CD14-positive monocyte (primary cell): ENCODE measurements at regions of chr10 and their contacts with region 1.

Region 1: DNA sequence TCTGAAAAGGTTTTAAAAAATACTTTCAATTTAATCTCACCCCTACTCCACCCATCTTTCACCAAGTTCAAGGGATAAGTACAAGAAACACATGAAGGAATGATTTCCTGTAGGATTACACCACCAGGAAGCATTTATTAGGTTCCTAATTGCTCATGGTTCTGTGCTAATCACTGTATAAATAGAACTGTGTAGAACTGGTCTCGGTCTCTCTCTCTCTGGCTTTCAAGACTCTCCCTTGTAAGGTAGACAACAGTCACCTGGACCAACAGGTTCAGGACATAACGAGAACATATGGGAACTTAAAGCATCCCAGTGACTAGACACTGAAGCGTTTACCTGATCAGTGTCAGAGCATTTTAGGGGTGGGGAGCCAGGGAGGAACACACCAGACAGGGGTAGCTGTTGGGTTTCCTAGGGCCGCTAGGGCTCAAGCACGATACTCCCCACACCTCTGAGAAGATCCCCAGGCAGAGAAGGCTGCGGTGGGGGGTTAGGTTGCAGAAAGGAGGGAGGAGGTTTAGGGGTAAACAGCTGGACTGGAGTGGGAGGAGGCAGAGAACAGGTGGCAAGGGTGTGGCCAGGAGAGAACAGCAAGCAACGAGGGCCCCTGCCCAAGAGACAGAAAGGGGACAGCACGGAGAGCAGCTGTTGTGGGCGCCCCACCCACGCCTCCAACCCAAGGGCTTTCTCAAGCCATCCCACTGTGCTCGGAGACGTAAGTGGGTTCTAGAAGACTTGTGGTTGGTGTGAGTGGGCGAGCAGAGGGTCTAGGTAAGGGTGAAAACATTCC is 52.5 kb upstream of the USP6NL start:
- DNase-seq: no peak
- H3K4me3 ChIP-seq: no peak overlapping the region
- H3K4me3 Mint-ChIP-seq: peak overlapping the region; percentile 3 to 49
- H3K27ac ChIP-seq: no peak overlapping the region
- H3K27ac Mint-ChIP-seq: peak overlapping the region in 1 of 7 donors; percentile 40
- H3K4me1 ChIP-seq: peaks cover 30 to 45% of the 10 kb centered on the region in 2 donors
- H3K4me1 Mint-ChIP-seq: peaks cover 47% of the 10 kb centered on the region
- H3K27me3 ChIP-seq: peaks cover 0 to 4% of the 10 kb centered on the region in 2 donors
- H3K27me3 Mint-ChIP-seq: peaks cover 8 to 13% (median 9%) of the 10 kb centered on the region in 3 donors
- CTCF ChIP-seq: no peak

Region 2: DNA sequence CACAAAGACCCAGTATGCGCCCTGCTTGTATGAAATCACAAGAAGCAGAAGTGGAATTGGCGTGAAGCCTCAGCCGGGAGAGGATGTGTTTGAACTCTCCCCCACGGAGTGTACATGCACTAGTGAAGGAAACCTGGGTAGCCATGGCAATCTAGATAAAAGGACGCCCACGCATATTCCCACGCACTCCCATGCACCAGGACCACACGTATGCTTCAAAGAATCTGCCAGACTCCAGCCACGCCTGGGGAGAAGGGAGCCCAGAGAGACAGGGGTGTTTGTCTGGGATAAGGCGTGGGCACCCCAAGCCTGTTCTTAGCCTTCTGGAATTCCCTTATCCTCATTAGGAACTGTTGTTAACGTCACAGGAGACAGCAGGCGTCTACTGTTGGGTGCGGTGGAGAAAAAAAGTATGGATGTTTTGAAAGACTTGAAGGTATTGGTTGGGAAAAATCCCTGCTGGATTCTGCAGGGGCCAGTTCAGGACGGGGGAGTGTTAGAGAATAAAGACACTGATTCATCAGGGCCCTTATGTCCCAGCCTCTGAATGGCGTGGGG is 49.3 kb after region 1 on chr10:
- intact Hi-C with region 1: loop called in 1 of 2 experiments (anchors 10 kb)
- DNase-seq: peak in 2 of 3 donors; percentile 24 to 29
- H3K4me3 ChIP-seq: no peak overlapping the region
- H3K4me3 Mint-ChIP-seq: peak overlapping the region in 1 of 2 donors; percentile 48
- H3K27ac ChIP-seq: no peak overlapping the region
- H3K27ac Mint-ChIP-seq: no peak overlapping the region
- H3K4me1 ChIP-seq: peaks cover 42 to 60% of the 10 kb centered on the region in 2 donors
- H3K4me1 Mint-ChIP-seq: peaks cover 47% of the 10 kb centered on the region
- H3K27me3 ChIP-seq: no peaks in the 10 kb centered on the region
- H3K27me3 Mint-ChIP-seq: peaks cover 8 to 14% (median 13%) of the 10 kb centered on the region in 3 donors
- CTCF ChIP-seq: no peak